ENCODE measurements at regions of chr1 and their contacts with region 1.

Region 1: GRCh38 chr1:40404670-40405462 is 31.3 kb downstream of the SMAP2 start:
- DNase-seq: peak; percentile 47
- H3K4me3 Mint-ChIP-seq: no peak overlapping the region
- H3K27ac Mint-ChIP-seq: peak overlapping the region; percentile 17
- H3K4me1 Mint-ChIP-seq: peaks cover 54% of the 10 kb centered on the region
- H3K27me3 Mint-ChIP-seq: no peaks in the 10 kb centered on the region

Region 2: GRCh38 chr1:40143891-40144575 is 260.8 kb before region 1 on chr1:
- CTCF ChIA-PET with region 1: interaction called, 34 read pairs
- POLR2A ChIA-PET with region 1: no interaction called
- DNase-seq: peak; percentile 54
- H3K4me3 Mint-ChIP-seq: no peak overlapping the region
- H3K27ac Mint-ChIP-seq: no peak overlapping the region
- H3K4me1 Mint-ChIP-seq: peaks cover 22% of the 10 kb centered on the region
- H3K27me3 Mint-ChIP-seq: peaks cover 39% of the 10 kb centered on the region

Region 3: DNA sequence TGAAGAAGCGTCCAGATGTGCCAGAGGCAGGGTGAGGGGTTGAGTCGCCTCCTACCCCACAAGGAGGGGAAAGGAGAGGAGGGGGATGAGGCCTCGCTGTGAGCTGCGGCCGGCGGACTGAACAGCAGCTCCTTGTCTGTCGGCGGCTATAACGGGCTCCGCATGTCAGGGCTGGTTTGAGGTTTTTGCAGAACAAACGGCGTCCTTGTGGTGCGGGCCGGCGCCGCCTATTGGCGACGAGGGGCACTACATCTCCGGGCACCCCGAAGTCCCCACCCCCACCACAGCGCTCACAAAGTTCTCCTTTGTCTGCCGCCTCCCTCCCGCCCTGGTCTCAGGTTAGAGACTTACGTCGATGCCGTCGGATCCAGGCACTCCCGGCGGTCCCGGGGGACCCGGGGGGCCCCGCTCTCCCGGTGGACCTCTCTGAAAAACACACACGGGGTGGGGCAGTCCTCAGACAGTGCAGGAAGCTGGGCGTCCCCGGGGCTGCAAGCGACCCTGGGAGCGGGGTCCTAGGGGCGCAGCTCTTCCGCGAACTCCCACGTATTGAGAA is 89.5 kb before region 1 on chr1:
- CTCF ChIA-PET with region 1: interaction called, 20 read pairs
- POLR2A ChIA-PET with region 1: interaction called, 10 read pairs
- DNase-seq: peak; percentile 85
- H3K4me3 Mint-ChIP-seq: peak overlapping the region; percentile 66
- H3K27ac Mint-ChIP-seq: no peak overlapping the region
- H3K4me1 Mint-ChIP-seq: peaks cover 59% of the 10 kb centered on the region
- H3K27me3 Mint-ChIP-seq: peaks cover 25% of the 10 kb centered on the region

Region 4: DNA sequence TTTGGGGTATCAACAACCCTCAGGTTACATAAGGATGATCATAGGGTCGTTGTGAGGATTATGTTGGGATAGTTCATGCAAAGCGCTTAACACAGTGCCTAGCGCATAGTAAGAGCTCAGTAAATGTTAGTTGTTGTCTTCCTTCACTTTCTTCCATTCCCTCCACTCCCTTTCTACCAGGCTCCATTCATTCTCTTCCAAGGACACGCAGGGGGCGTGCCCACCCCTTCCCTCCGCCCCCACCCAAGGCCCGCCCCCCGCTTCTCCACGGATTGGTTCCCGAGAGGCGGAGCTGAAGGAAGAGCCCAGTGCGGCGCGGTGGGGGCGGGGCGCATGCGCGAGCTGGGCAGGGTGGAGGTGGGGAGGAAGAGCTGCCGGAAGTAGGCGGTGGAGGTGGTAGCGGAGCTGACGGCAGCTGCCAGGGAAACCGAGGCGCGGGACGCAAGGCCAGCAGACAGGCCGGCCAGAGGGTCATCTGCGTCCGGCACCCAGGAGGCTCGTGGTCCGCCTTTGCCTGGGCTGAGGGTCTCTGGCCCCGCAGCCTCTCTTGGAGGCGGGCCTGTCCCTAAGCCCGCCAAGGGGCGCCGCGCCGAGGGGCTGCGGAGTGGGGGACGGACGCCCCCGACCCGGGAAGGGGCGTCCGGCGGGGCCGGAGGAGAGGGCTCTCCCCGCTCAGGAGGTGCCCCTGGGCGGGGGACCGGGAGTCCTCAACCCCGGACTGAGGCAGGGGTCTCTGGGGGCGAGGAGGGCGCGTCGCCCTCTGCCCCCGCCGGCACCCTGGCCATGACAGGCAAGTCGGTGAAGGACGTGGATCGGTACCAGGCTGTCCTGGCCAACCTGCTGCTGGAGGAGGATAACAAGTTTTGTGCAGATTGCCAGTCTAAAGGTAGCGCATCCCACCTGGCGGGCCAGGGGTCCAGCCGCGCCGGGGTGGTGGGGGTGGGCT is 31.3 kb before region 1 on chr1 and contains the start of gene SMAP2:
- CTCF ChIA-PET with region 1: interaction called, 21 read pairs
- POLR2A ChIA-PET with region 1: interaction called, 997 read pairs
- DNase-seq: peak; percentile 96
- H3K4me3 Mint-ChIP-seq: peak within 1 kb of the TSS; percentile 99
- H3K27ac Mint-ChIP-seq: peak within 1 kb of the TSS; percentile 99
- H3K4me1 Mint-ChIP-seq: peaks cover 49% of the 10 kb centered on the region
- H3K27me3 Mint-ChIP-seq: no peaks in the 10 kb centered on the region
- total RNA-seq, gene SMAP2: 172 to 173 TPM

Region 5: DNA sequence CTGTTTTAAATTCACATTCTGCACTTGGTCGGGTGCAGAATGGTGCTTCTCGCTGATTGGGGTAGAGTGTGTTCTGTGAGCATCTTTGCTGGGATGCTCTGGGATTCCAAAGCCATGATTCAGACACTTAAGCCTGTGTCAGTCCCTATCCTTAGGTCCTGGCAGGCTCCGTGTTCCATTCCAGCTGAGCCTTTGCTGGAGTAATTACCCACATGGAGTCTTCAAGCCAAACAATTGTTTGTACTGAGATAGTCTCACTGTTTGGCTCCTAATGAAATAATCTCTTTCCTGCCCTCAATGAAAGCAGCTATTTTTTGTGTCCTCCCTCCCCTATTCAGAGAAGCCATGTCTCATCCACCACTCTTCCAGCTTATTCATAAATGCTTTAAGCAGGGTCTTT is 12.6 kb before region 1 on chr1:
- CTCF ChIA-PET with region 1: interaction called, 37 read pairs
- POLR2A ChIA-PET with region 1: interaction called, 997 read pairs
- DNase-seq: no peak
- H3K4me3 Mint-ChIP-seq: no peak overlapping the region
- H3K27ac Mint-ChIP-seq: peak overlapping the region; percentile 55
- H3K4me1 Mint-ChIP-seq: peaks cover 93% of the 10 kb centered on the region
- H3K27me3 Mint-ChIP-seq: no peaks in the 10 kb centered on the region

Measured in activated CD4-positive, alpha-beta memory T cell treated with anti-CD3 and anti-CD28 coated beads, Interleukin-2, amount 10 ng/mL, durations not matched to agents 7 days and 5 days (primary cell).